ENCODE measurements at regions of chr10 and their contacts with region 1.

Region 1: GRCh38 chr10:14074057-14074884 is 256.5 kb downstream of the FRMD4A start:
- DNase-seq: peak; percentile 99
- H3K4me3 ChIP-seq: no peak overlapping the region
- CTCF ChIP-seq: no peak

Region 2: DNA sequence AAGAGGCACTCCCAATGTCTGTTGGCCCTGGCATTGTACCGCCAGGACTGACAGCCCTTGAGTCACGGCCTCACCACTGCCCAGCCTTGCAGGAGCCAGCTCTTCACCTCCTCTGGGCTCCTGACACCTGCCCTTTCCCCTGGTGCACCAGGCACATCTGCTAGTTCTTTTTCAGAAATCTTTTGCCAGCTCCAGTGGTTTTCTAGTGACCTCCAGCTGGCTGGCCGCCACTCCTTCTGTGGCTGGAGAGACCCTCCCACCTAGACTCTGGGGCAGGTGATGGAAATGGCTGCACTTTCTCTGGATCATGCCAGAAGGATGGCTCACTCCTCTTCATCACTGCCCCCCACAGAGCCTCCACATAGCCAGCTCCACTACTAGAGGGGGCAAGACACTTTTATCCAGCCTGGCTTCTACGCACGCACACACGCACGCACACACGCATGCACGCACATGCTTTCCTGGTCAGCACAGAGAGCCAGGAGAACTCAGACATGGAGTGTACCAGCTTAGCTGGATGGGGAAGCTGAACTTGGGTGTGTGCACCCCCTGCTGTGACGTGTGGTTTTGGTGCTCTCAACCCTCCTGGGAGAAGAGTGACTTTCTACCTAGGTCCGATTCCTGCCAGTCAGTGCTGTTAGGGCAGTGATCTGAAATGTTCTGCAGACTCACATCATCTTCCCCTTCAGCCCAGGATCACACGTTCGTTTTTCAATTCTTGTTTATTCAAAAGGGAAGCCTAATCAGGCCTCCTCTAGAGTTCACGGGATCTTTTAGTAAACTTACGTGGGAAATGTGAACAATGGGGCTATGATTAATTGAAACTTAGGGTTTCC is 265.5 kb before region 1 on chr10:
- in situ Hi-C with region 1: loop called (anchors 10 kb)
- DNase-seq: peak; percentile 16
- H3K4me3 ChIP-seq: no peak overlapping the region
- CTCF ChIP-seq: no peak